Activated naive CD4-positive, alpha-beta T cell treated with anti-CD3 and anti-CD28 coated beads, Interleukin-2, amount 10 ng/mL, durations not matched to agents 7 days and 5 days (primary cell): ENCODE measurements at regions of chr19 and their contacts with region 1.

Region 1: DNA sequence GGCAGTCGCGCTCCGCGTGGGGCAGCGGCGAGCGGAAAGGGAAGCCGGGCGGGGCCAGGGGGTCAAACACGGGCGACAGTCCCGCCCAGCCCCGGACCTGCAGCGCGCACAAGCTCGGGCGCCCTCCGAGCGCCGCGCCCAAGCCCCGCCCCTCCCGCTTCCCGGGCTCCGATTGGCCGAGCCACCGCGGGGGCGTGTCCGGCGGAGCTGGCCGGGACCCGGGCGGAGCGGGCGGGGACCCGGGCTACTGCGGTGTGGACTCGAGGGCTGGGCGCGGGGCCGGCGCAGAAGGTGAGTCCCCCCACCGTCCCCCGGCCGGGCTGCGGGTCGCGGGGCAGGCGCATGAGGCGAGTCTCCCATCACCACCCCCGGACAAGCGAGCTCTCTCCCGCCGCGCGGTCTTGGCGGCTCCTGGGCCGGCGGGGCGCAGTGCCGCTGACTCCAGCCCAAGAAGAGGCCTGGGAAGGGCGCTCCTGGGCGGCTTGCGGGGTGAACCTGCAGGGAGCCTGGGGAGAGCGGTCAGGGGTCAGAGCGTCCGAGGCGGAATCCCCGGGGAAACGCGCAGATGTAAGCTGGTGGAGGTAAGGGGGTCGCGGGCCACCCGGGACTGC is at the start of gene PLEKHF1:
- DNase-seq: peak; percentile 91
- H3K4me3 Mint-ChIP-seq: peak within 1 kb of the TSS; percentile 92
- H3K27ac Mint-ChIP-seq: peak within 1 kb of the TSS; percentile 95
- H3K4me1 Mint-ChIP-seq: peaks cover 63% of the 10 kb centered on the region
- H3K27me3 Mint-ChIP-seq: peaks cover 12% of the 10 kb centered on the region

Region 2: DNA sequence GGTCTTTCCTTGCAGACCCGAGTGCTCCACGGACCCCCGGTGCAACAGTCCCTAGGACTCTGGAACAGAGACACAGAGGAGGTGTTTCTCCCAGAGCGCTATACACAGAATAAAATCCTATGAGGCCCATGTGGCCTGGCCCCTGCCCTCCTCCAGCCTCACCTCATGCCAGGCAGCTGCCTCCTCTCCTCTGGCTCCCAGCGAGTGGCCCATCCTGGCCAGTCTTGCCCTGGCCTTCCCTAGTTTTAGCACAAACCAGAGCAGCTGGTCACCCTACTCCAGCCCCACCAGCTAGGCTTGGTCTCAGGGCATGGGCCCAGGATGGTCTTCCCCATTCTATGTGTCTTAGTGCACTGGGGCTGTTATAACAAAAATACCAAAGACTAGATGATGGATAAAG is 38.9 kb before region 1 on chr19:
- CTCF ChIA-PET with region 1: no interaction called
- DNase-seq: no peak
- H3K4me3 Mint-ChIP-seq: no peak overlapping the region
- H3K27ac Mint-ChIP-seq: no peak overlapping the region
- H3K4me1 Mint-ChIP-seq: peaks cover 36% of the 10 kb centered on the region
- H3K27me3 Mint-ChIP-seq: peaks cover 6% of the 10 kb centered on the region

Region 3: GRCh38 chr19:29636553-29637360 is 28.6 kb before region 1 on chr19:
- CTCF ChIA-PET with region 1: no interaction called
- DNase-seq: no peak
- H3K4me3 Mint-ChIP-seq: no peak overlapping the region
- H3K27ac Mint-ChIP-seq: no peak overlapping the region
- H3K4me1 Mint-ChIP-seq: no peaks in the 10 kb centered on the region
- H3K27me3 Mint-ChIP-seq: peaks cover 24% of the 10 kb centered on the region

Region 4: GRCh38 chr19:29680447-29680846 is 15.1 kb after region 1 on chr19:
- CTCF ChIA-PET with region 1: interaction called, 33 read pairs
- DNase-seq: peak; percentile 89
- H3K4me3 Mint-ChIP-seq: peak overlapping the region; percentile 35
- H3K27ac Mint-ChIP-seq: peak overlapping the region; percentile 87
- H3K4me1 Mint-ChIP-seq: peaks cover 70% of the 10 kb centered on the region
- H3K27me3 Mint-ChIP-seq: peaks cover 3% of the 10 kb centered on the region

Region 5: GRCh38 chr19:29694669-29695627 is 29.6 kb after region 1 on chr19:
- CTCF ChIA-PET with region 1: interaction called, 19 read pairs
- DNase-seq: peak; percentile 88
- H3K4me3 Mint-ChIP-seq: no peak overlapping the region
- H3K27ac Mint-ChIP-seq: peak overlapping the region; percentile 44
- H3K4me1 Mint-ChIP-seq: peaks cover 18% of the 10 kb centered on the region
- H3K27me3 Mint-ChIP-seq: no peaks in the 10 kb centered on the region